ENCODE measurements at regions of chr21 and their contacts with region 1.

Region 1: DNA sequence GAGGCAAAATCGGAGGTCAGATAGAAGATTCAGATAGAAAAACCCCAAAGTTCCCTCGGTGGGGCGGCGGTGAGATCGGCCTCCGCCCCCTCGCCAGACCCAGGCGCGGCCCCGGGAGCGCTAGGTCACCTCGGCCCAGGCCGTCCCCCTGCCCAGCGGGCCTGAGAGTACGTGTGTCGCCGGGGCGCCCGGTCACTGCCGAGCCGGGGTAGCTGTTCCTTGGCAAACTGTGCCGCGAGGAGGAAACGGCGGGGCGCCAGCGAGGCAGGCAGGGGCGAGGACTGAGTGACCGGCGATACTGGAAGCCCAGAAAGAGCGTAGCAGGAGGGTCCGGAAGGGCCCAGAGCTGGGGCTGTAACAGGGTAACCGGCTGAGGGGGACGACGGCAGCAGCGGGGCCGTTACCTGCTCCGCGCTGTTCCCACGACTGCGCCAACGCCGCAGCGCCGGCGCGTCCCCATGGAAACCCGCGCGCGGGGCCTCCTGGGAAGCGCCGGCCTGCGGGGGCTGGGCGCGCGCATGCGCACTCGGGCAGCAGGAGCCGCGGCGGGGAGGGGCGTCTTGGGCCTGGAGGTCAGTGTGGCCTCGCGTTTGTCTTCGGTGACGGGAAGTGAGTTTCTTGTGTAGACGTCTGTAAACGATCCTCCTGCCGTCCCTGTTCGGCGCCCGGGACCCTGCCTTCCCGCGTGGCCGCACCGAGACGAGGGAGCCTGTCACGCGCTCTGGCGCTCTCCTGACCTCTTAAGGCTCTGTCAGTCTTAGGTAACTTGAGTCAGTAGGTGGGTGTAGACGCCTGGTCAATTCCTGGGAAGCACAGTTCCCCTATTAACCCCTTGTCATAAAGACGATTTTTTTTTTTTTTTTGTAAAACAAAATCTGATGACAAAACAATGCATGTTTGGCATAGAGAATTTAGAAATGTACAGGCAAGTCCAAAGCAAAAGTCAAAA is at the start of gene LCA5L:
- DNase-seq: peak; percentile 90
- H3K4me3 Mint-ChIP-seq: peak within 1 kb of the TSS; percentile 93
- H3K27ac Mint-ChIP-seq: peak within 1 kb of the TSS; percentile 95
- H3K4me1 Mint-ChIP-seq: peaks cover 14% of the 10 kb centered on the region
- H3K27me3 Mint-ChIP-seq: peaks cover 33% of the 10 kb centered on the region
- total RNA-seq, gene LCA5L: not detected in 2 replicates

Region 2: GRCh38 chr21:39313571-39314142 is 131.9 kb before region 1 on chr21 and contains the start of gene BRWD1:
- intact Hi-C with region 1: loop called (anchors 1 kb)
- DNase-seq: peak; percentile 75
- H3K4me3 Mint-ChIP-seq: peak within 1 kb of the TSS; percentile 92
- H3K27ac Mint-ChIP-seq: peak within 1 kb of the TSS; percentile 97
- H3K4me1 Mint-ChIP-seq: peaks cover 31% of the 10 kb centered on the region
- H3K27me3 Mint-ChIP-seq: no peaks in the 10 kb centered on the region
- total RNA-seq, gene BRWD1: 34.7 and 38.1 TPM in 2 replicates

Region 3: GRCh38 chr21:39379986-39380891 is 65.4 kb before region 1 on chr21:
- intact Hi-C with region 1: loop called (anchors 2 kb)
- DNase-seq: peak; percentile 92
- H3K4me3 Mint-ChIP-seq: peak overlapping the region; percentile 94
- H3K27ac Mint-ChIP-seq: peak overlapping the region; percentile 91
- H3K4me1 Mint-ChIP-seq: peaks cover 45% of the 10 kb centered on the region
- H3K27me3 Mint-ChIP-seq: peaks cover 7% of the 10 kb centered on the region

Region 4: GRCh38 chr21:39388038-39388810 is 57.4 kb before region 1 on chr21:
- intact Hi-C with region 1: loop called (anchors 2 kb)
- DNase-seq: peak; percentile 80
- H3K4me3 Mint-ChIP-seq: peak overlapping the region; percentile 86
- H3K27ac Mint-ChIP-seq: peak overlapping the region; percentile 87
- H3K4me1 Mint-ChIP-seq: peaks cover 19% of the 10 kb centered on the region
- H3K27me3 Mint-ChIP-seq: no peaks in the 10 kb centered on the region

Measured in activated T-helper 1 cell treated with anti-CD3 and anti-CD28 coated beads, Interleukin-12 subunit alpha, Interleukin-12 subunit beta, Interleukin-2, Interleukin-4 antibody, amounts not matched to agents 30 ng/mL and 10 ng/mL and 1 ng/mL, durations not matched to agents 14 hours and 24 hours and 36 hours (primary cell).